Dendritic cell treated with granulocyte-macrophage colony-stimulating factor and Interleukin-4, amounts not matched to agents 40 ng/mL and 50 ng/mL, for 4 days (primary cell): ENCODE measurements at regions of chr14 and their contacts with region 1.

Region 1: GRCh38 chr14:105020815-105021655 is at the start of gene CDCA4:
- H3K4me3 Mint-ChIP-seq: peak within 1 kb of the TSS; percentile 86
- H3K27ac Mint-ChIP-seq: peak within 1 kb of the TSS; percentile 91
- H3K4me1 Mint-ChIP-seq: peaks cover 64% of the 10 kb centered on the region
- H3K27me3 Mint-ChIP-seq: no peaks in the 10 kb centered on the region

Region 2: GRCh38 chr14:104816678-104816945 is 204.4 kb before region 1 on chr14:
- intact Hi-C with region 1: no loop called
- H3K4me3 Mint-ChIP-seq: peak overlapping the region; percentile 97
- H3K27ac Mint-ChIP-seq: peak overlapping the region; percentile 93
- H3K4me1 Mint-ChIP-seq: peaks cover 27% of the 10 kb centered on the region
- H3K27me3 Mint-ChIP-seq: no peaks in the 10 kb centered on the region

Region 3: GRCh38 chr14:104940526-104941150 is 80.4 kb before region 1 on chr14:
- intact Hi-C with region 1: no loop called
- H3K4me3 Mint-ChIP-seq: no peak overlapping the region
- H3K27ac Mint-ChIP-seq: no peak overlapping the region
- H3K4me1 Mint-ChIP-seq: no peaks in the 10 kb centered on the region
- H3K27me3 Mint-ChIP-seq: peaks cover 46% of the 10 kb centered on the region

Region 4: GRCh38 chr14:104985675-104986525 is 35.1 kb before region 1 on chr14 and contains the start of gene CLBA1:
- intact Hi-C with region 1: loop called (anchors 1 kb)
- H3K4me3 Mint-ChIP-seq: peak within 1 kb of the TSS; percentile 75
- H3K27ac Mint-ChIP-seq: peak within 1 kb of the TSS; percentile 85
- H3K4me1 Mint-ChIP-seq: peaks cover 34% of the 10 kb centered on the region
- H3K27me3 Mint-ChIP-seq: peaks cover 34% of the 10 kb centered on the region

Region 5: DNA sequence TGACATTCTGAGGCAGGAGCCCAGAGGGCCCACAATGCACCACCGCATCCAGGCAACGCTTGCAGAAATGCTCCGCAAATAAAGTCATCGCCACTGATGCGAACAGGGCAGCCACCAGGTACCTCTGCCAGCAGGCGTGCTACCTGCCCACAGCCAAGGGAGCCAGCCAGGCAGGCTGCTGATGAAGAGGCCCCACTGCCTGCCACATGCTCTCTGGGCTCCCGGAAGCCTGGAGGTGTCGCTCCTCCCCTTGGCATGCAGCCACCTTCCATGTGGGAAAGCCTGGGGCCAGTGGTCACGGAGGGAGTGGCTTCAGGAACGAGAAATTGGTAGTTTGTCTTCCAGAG is 29.5 kb after region 1 on chr14:
- intact Hi-C with region 1: no loop called
- H3K4me3 Mint-ChIP-seq: no peak overlapping the region
- H3K27ac Mint-ChIP-seq: no peak overlapping the region
- H3K4me1 Mint-ChIP-seq: peaks cover 41% of the 10 kb centered on the region
- H3K27me3 Mint-ChIP-seq: no peaks in the 10 kb centered on the region